GM12878 (cell line): ENCODE measurements at regions of chr9 and their contacts with region 1.

Region 1: DNA sequence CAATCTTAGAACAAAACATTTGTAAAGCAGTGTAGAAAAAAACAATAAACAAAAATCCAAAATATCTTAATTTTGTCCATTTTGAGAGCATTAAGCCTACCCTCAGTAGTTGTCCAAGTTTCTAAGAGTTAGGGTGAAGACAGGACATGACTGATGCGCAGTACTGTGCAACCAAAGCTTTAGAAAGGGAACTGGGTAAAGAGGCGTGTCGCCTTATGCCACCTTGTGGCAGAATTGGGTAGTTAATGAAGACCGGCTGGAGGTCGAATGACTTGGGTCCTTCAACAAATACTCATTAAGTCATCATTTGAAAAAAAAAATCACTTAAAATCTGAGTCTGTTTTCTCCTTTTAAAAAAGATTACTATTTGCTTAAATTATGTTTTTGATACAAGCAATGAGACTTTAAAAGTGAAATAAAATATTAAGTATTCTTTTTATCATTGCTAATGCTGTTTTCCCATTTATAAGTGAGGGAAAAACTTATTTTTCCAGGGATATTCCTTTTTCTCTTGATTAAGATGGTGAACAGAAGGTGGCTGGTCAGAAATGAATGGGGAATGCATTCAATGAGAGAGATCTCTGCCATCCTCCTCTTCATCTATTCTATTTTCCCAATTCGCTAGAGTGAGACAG is 3.5 kb upstream of the RNF20 start:
- DNase-seq: peak; percentile 24
- ATAC-seq: peak; percentile 67
- H3K4me3 ChIP-seq: no peak overlapping the region
- H3K27ac ChIP-seq: no peak overlapping the region
- H3K4me1 ChIP-seq: no peaks in the 10 kb centered on the region
- H3K27me3 ChIP-seq: no peaks in the 10 kb centered on the region
- CTCF ChIP-seq: peak; percentile 71 to 78 (median 77)
- EP300 ChIP-seq: no peak
- POLR2A ChIP-seq: no peak
- RAD21 ChIP-seq: peak; percentile 70

Region 2: GRCh38 chr9:100714372-100715099 is 815.7 kb before region 1 on chr9:
- CTCF ChIA-PET with region 1: interaction called, 3 read pairs
- POLR2A ChIA-PET with region 1: no interaction called
- RAD21 ChIA-PET with region 1: no interaction called
- SMC1A ChIA-PET with region 1: no interaction called
- in situ Hi-C with region 1: no loop called
- intact Hi-C with region 1: loop called (anchors 2 kb)
- DNase-seq: no peak
- ATAC-seq: peak; percentile 84
- H3K4me3 ChIP-seq: no peak overlapping the region
- H3K27ac ChIP-seq: no peak overlapping the region
- H3K4me1 ChIP-seq: no peaks in the 10 kb centered on the region
- H3K27me3 ChIP-seq: no peaks in the 10 kb centered on the region
- CTCF ChIP-seq: peak; percentile 78 to 84 (median 81)
- EP300 ChIP-seq: no peak
- POLR2A ChIP-seq: no peak
- RAD21 ChIP-seq: peak; percentile 71

Region 3: DNA sequence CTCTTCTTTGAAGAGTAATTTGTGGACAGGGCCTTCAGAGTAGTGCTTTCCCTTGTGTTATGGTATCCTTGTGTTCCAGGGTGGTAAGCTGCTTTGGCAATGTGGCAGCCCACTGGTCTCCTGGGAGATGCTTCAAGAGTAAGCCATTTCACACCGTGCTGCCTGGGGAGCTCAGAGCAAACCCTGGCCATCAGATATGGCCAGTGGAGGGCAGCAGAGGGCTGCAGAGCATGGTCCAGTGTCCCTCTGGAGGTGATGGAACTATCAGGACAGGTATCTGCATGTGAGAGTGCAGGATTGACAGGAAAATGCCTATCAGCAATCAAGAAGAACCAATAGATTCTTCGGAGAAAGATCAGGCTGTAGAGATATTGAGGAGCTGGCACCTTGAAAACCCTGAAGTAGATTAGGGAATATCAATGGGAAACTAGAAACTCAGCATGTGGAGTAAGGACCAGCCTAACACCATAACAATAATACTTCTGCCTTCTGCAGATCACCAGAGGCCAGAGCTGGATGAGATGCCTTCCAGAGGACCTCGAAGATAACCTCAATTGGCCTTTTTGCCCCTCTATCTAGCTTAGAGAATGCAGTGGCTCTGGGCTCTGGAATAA is 410.9 kb before region 1 on chr9:
- CTCF ChIA-PET with region 1: no interaction called
- POLR2A ChIA-PET with region 1: no interaction called
- RAD21 ChIA-PET with region 1: no interaction called
- SMC1A ChIA-PET with region 1: no interaction called
- in situ Hi-C with region 1: no loop called
- intact Hi-C with region 1: loop called (anchors 5 kb)
- DNase-seq: no peak
- ATAC-seq: peak; percentile 98
- H3K4me3 ChIP-seq: no peak overlapping the region
- H3K27ac ChIP-seq: no peak overlapping the region
- H3K4me1 ChIP-seq: no peaks in the 10 kb centered on the region
- H3K27me3 ChIP-seq: no peaks in the 10 kb centered on the region
- CTCF ChIP-seq: peak; percentile 72 to 83 (median 80)
- EP300 ChIP-seq: no peak
- POLR2A ChIP-seq: no peak
- RAD21 ChIP-seq: peak; percentile 66

Region 4: DNA sequence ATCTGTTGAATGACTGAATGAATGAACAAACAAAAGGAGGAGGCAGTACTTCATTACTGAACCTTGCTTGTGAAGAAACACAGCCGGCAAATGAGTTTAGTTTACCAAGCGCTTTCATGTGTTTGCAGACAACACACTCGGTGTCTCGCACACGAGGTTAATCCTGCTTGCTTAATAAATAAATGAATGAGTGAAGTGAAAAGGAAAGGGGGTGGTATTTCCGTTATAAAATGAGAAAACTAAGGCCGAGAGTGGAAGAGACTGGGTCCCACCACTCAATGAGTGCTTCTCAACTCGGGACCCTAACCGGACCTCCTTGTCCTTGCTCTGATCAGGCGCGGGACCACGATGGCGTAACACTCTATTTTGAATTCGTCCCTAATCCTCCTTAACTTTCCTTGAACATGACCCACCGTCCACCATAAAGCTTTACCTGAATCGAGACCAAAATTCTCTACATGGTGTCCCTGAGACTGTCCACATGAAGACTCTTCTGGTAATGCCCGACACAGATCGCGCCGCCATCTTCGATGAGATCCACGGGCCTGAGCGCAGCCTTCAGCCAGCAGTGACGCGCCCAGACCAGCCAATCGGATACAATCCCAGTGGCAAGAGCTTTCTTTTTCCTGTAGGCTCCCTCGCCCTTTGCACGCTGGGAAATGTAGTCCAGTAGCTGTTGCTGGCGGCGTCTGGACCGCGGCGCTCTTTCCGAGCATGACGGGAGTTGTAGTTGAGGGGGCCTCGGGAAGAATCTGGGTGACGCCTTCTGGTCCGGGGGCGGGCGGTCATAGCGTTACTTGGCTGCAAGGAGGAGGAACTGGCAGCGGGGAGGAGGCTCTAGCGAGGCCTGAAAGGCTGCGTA is 131.9 kb before region 1 on chr9 and contains the starts of genes MRPL50 and ZNF189:
- CTCF ChIA-PET with region 1: interaction called, 4 read pairs
- POLR2A ChIA-PET with region 1: interaction called, 6 read pairs
- RAD21 ChIA-PET with region 1: interaction called, 8 read pairs
- SMC1A ChIA-PET with region 1: interaction called, 4 read pairs
- in situ Hi-C with region 1: loop called (anchors 5 kb)
- intact Hi-C with region 1: loop called (anchors 2 kb)
- DNase-seq: peak; percentile 93
- ATAC-seq: peak; percentile 97
- H3K4me3 ChIP-seq: peak within 1 kb of the TSS; percentile 90
- H3K27ac ChIP-seq: peak within 1 kb of the TSS; percentile 84
- H3K4me1 ChIP-seq: 0 out of 2 replicates have a peak, but pooled peaks cover 3% of the 10 kb centered on the region
- H3K27me3 ChIP-seq: no peaks in the 10 kb centered on the region
- CTCF ChIP-seq: no peak
- EP300 ChIP-seq: no peak
- POLR2A ChIP-seq: peak; percentile 96
- RAD21 ChIP-seq: no peak
- polyA plus RNA-seq, gene MRPL50: 50.3 to 79.4 TPM
- polyA plus RNA-seq, gene ZNF189: 3.1 to 3.6 TPM

Region 5: GRCh38 chr9:101418518-101419430 is 111.4 kb before region 1 on chr9:
- CTCF ChIA-PET with region 1: no interaction called
- POLR2A ChIA-PET with region 1: no interaction called
- RAD21 ChIA-PET with region 1: no interaction called
- SMC1A ChIA-PET with region 1: no interaction called
- in situ Hi-C with region 1: no loop called
- intact Hi-C with region 1: no loop called
- DNase-seq: no peak
- ATAC-seq: no peak
- H3K4me3 ChIP-seq: no peak overlapping the region
- H3K27ac ChIP-seq: no peak overlapping the region
- H3K4me1 ChIP-seq: no peaks in the 10 kb centered on the region
- H3K27me3 ChIP-seq: no peaks in the 10 kb centered on the region
- CTCF ChIP-seq: no peak
- EP300 ChIP-seq: no peak
- POLR2A ChIP-seq: no peak
- RAD21 ChIP-seq: no peak

Region 6: GRCh38 chr9:101449140-101449721 is 81.0 kb before region 1 on chr9:
- CTCF ChIA-PET with region 1: interaction called, 228 read pairs
- POLR2A ChIA-PET with region 1: no interaction called
- RAD21 ChIA-PET with region 1: interaction called, 13 read pairs
- SMC1A ChIA-PET with region 1: interaction called, 11 read pairs
- in situ Hi-C with region 1: no loop called
- intact Hi-C with region 1: no loop called
- DNase-seq: no peak
- ATAC-seq: peak; percentile 99
- H3K4me3 ChIP-seq: peak overlapping the region; percentile 46; the same call in 1 of the 2 replicates
- H3K27ac ChIP-seq: no peak overlapping the region
- H3K4me1 ChIP-seq: no peaks in the 10 kb centered on the region
- H3K27me3 ChIP-seq: peaks cover 0 to 3% of the 10 kb centered on the region in 2 experiments; a peak in 2 of 4 replicates
- CTCF ChIP-seq: peak; percentile 34 to 54 (median 48); a peak in 4 of 6 replicates
- EP300 ChIP-seq: no peak
- POLR2A ChIP-seq: no peak
- RAD21 ChIP-seq: peak; percentile 40

Region 7: DNA sequence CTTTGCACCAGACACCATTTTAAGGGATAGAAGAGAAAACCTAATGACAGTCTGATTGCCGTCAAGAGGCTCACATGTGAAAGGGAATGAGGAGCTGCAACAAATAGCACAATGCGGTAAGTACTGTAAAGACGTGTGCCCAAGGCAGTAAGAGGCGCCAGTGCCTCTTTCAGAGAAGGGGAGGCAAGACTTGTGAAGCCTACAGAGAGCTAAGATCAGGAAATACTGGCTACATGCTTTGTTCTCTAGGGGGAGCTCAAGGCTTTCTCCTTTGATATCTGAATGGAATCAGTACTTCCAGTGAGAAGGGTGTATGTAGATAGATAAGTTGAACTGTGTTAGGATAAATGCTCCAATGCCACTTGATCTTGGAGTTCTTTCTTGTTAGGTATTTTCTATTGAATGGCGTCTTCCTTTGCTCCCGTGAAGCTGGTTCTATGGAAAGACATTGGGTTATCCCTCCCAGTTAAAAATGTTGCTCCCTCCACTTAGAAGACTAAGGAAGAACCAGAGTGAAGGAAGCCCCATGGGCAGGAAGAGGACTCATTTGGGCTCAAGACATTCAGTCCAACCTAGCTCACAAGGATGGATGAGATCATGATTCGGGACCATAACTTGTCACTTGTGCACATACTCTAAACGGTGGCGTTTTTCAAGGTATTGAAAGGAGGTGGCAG is 71.1 kb before region 1 on chr9:
- CTCF ChIA-PET with region 1: interaction called, 228 read pairs
- POLR2A ChIA-PET with region 1: no interaction called
- RAD21 ChIA-PET with region 1: interaction called, 15 read pairs
- SMC1A ChIA-PET with region 1: interaction called, 41 read pairs
- in situ Hi-C with region 1: loop called (anchors 5 kb)
- intact Hi-C with region 1: loop called (anchors 1 kb)
- DNase-seq: no peak
- ATAC-seq: peak; percentile 96
- H3K4me3 ChIP-seq: no peak overlapping the region
- H3K27ac ChIP-seq: no peak overlapping the region
- H3K4me1 ChIP-seq: no peaks in the 10 kb centered on the region
- H3K27me3 ChIP-seq: no peaks in the 10 kb centered on the region
- CTCF ChIP-seq: peak; percentile 66 to 82 (median 73)
- EP300 ChIP-seq: no peak
- POLR2A ChIP-seq: no peak
- RAD21 ChIP-seq: peak; percentile 80

Region 8: GRCh38 chr9:101468116-101468515 is 62.1 kb before region 1 on chr9:
- CTCF ChIA-PET with region 1: interaction called, 228 read pairs
- POLR2A ChIA-PET with region 1: no interaction called
- RAD21 ChIA-PET with region 1: interaction called, 3 read pairs
- SMC1A ChIA-PET with region 1: interaction called, 5 read pairs
- in situ Hi-C with region 1: no loop called
- intact Hi-C with region 1: no loop called
- DNase-seq: no peak
- ATAC-seq: no peak
- H3K4me3 ChIP-seq: no peak overlapping the region
- H3K27ac ChIP-seq: no peak overlapping the region
- H3K4me1 ChIP-seq: no peaks in the 10 kb centered on the region
- H3K27me3 ChIP-seq: no peaks in the 10 kb centered on the region; a peak in 1 of 4 replicates
- CTCF ChIP-seq: no peak
- EP300 ChIP-seq: no peak
- POLR2A ChIP-seq: no peak
- RAD21 ChIP-seq: no peak

Region 9: GRCh38 chr9:101907466-101907865 is 377.3 kb after region 1 on chr9:
- CTCF ChIA-PET with region 1: no interaction called
- POLR2A ChIA-PET with region 1: no interaction called
- RAD21 ChIA-PET with region 1: no interaction called
- SMC1A ChIA-PET with region 1: no interaction called
- in situ Hi-C with region 1: no loop called
- intact Hi-C with region 1: no loop called
- DNase-seq: no peak
- ATAC-seq: no peak
- H3K4me3 ChIP-seq: no peak overlapping the region
- H3K27ac ChIP-seq: no peak overlapping the region
- H3K4me1 ChIP-seq: no peaks in the 10 kb centered on the region
- H3K27me3 ChIP-seq: no peaks in the 10 kb centered on the region
- CTCF ChIP-seq: no peak
- EP300 ChIP-seq: no peak
- POLR2A ChIP-seq: no peak
- RAD21 ChIP-seq: no peak